GM12878 (cell line): ENCODE measurements at regions of chr1 and their contacts with region 1.

Region 1: DNA sequence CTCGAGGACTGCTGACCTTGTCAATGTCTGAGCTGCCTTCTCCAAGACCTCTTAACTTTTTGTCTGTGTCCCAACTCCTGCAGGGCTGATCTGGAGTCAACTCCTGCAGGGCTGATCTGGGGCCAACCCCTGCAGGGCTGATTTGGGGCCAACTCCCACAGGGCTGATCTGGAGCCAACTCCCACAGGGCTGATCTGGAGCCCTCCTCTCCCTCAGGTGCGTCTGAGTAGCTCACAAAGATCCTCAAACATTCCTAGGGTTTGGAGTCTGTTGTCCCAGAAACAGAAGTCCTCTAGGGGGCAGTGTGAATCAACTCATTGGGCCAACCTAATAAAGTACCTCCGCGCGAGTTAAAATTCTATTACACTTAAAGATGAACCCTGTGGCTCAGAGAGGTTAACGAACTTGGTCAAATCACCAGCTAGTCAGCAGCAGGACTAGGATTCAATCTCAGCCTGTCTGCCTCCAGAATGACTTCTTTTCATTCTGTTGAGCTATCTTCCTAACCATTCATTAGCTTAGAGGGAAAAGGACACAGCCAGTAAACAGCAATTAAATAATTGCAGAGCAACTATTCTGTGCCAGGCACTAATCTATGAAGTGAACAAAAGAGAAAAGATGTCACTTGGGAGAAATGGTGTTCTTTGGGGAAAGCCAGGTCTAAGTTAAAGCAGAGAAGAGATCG is 17.2 kb upstream of the RLF start:
- DNase-seq: peak; percentile 39
- ATAC-seq: peak; percentile 96
- H3K4me3 ChIP-seq: no peak overlapping the region
- H3K27ac ChIP-seq: no peak overlapping the region
- H3K4me1 ChIP-seq: no peaks in the 10 kb centered on the region
- H3K27me3 ChIP-seq: no peaks in the 10 kb centered on the region; a peak in 1 of 4 replicates
- CTCF ChIP-seq: peak; percentile 69 to 84 (median 72)
- EP300 ChIP-seq: no peak
- POLR2A ChIP-seq: no peak
- RAD21 ChIP-seq: peak; percentile 95

Region 2: DNA sequence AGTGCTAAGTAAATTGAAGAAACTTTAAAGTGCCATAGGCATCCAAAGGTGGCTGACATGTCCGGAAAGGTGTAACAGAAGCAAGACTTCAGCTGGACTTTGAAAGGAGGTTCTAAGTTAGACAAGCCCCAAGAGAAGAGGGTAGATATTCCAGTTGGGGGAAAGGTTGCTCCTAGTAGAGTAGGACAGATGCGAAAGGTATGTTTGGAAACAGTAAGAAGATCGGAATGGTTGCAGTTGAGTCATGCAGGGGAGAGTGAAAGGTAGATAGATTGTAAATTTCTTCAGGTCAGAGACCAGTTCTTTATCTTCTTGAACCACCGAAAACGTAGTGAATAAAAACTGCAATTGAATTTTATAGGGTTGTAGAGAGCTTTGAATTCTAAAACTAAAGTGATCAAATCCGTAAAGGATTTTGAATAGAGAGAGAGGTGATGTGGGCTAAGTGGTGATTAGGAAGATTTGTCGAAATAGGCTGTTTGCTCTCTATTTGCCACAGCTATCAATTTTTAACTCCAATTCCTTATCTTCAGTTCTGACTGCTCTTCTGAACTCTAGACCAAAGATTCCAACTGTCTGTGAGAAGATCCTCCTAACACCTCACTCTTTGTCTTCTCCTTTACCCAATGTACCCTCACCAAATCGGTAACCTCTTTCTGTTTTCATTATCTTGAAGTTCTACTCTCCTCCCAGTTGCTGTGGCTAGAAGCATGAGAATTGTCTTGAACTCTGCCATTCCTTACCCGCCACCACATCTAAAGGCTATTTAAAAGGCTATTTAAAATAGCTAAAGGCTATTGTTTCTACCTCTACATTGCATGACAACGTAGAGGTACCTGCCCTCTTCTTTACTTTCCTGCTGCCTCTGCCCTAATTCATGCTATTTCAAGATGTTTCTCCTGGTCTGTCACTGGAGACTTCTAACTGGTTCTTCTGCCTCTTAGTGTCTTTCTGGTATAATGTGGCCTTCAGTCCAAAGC is 922.9 kb before region 1 on chr1:
- CTCF ChIA-PET with region 1: no interaction called
- POLR2A ChIA-PET with region 1: no interaction called
- RAD21 ChIA-PET with region 1: no interaction called
- SMC1A ChIA-PET with region 1: no interaction called
- in situ Hi-C with region 1: no loop called
- intact Hi-C with region 1: no loop called
- DNase-seq: no peak
- ATAC-seq: no peak
- H3K4me3 ChIP-seq: no peak overlapping the region
- H3K27ac ChIP-seq: no peak overlapping the region; the same call in 1 of the 2 replicates
- H3K4me1 ChIP-seq: peaks cover 2% of the 10 kb centered on the region; the same call in 1 of the 2 replicates
- H3K27me3 ChIP-seq: no peaks in the 10 kb centered on the region
- CTCF ChIP-seq: no peak
- EP300 ChIP-seq: no peak
- POLR2A ChIP-seq: no peak
- RAD21 ChIP-seq: no peak

Region 3: GRCh38 chr1:40161125-40161887 is 17.3 kb after region 1 on chr1 and contains the start of gene RLF:
- CTCF ChIA-PET with region 1: interaction called, 15 read pairs
- POLR2A ChIA-PET with region 1: no interaction called
- RAD21 ChIA-PET with region 1: interaction called, 4 read pairs
- SMC1A ChIA-PET with region 1: interaction called, 4 read pairs
- in situ Hi-C with region 1: no loop called
- intact Hi-C with region 1: no loop called
- DNase-seq: peak; percentile 67
- ATAC-seq: peak; percentile 92
- H3K4me3 ChIP-seq: peak within 1 kb of the TSS; percentile 97
- H3K27ac ChIP-seq: peak within 1 kb of the TSS; percentile 93
- H3K4me1 ChIP-seq: no peaks in the 10 kb centered on the region
- H3K27me3 ChIP-seq: no peaks in the 10 kb centered on the region
- CTCF ChIP-seq: no peak
- EP300 ChIP-seq: no peak; a peak in 1 of 4 replicates
- POLR2A ChIP-seq: peak; percentile 99
- RAD21 ChIP-seq: no peak
- polyA plus RNA-seq, gene RLF: 2.0 to 3.6 TPM

Region 4: DNA sequence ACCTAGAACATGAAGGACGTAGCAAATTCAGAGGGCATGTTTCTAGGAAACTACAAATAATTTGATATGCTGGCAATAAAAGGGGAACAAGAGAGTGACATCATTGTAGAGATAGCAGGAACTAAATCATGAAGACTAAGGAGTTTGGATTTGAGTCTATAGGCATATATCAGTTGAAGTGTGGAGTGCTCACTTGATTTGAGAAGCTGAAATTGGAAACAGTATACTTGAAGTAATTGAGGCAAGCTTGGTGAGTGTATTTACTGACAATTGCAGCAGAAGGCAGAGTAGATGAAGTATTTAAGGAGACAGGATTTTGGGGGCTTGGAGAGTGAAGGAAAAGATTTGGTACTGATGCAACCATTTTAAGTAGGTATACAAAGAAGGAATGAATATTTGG is 97.3 kb after region 1 on chr1:
- CTCF ChIA-PET with region 1: interaction called, 11 read pairs
- POLR2A ChIA-PET with region 1: no interaction called
- RAD21 ChIA-PET with region 1: no interaction called
- SMC1A ChIA-PET with region 1: no interaction called
- in situ Hi-C with region 1: no loop called
- intact Hi-C with region 1: no loop called
- DNase-seq: no peak
- ATAC-seq: peak; percentile 41
- H3K4me3 ChIP-seq: no peak overlapping the region
- H3K27ac ChIP-seq: peak overlapping the region; percentile 60
- H3K4me1 ChIP-seq: peaks cover 13% of the 10 kb centered on the region
- H3K27me3 ChIP-seq: no peaks in the 10 kb centered on the region
- CTCF ChIP-seq: no peak
- EP300 ChIP-seq: no peak
- POLR2A ChIP-seq: no peak
- RAD21 ChIP-seq: no peak

Region 5: DNA sequence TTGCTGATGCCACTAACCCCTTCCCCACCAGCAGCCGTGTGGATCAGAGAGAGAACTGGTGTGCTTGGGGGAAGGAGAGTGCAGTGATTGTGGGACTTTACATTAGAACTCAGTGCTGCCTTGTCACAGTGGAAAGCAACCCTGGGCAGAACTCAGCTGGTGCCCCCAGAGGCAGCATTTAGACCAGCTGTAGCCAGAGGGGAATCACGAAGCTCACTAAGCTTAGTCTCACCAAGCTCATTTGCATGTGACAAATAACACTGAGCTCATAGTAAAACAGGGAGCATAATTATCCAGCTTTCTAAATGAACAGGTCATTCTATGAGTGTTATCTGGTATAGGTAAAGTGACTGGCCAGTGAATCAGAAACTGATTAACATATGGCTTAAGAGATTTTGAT is 219.7 kb after region 1 on chr1:
- CTCF ChIA-PET with region 1: interaction called, 14 read pairs
- POLR2A ChIA-PET with region 1: no interaction called
- RAD21 ChIA-PET with region 1: interaction called, 8 read pairs
- SMC1A ChIA-PET with region 1: interaction called, 5 read pairs
- in situ Hi-C with region 1: no loop called
- intact Hi-C with region 1: no loop called
- DNase-seq: no peak
- ATAC-seq: peak; percentile 100
- H3K4me3 ChIP-seq: no peak overlapping the region
- H3K27ac ChIP-seq: no peak overlapping the region
- H3K4me1 ChIP-seq: no peaks in the 10 kb centered on the region; the same call in 1 of the 2 replicates
- H3K27me3 ChIP-seq: no peaks in the 10 kb centered on the region
- CTCF ChIP-seq: peak; percentile 28 to 43 (median 36); a peak in 4 of 6 replicates
- EP300 ChIP-seq: no peak
- POLR2A ChIP-seq: no peak
- RAD21 ChIP-seq: peak; percentile 32

Region 6: DNA sequence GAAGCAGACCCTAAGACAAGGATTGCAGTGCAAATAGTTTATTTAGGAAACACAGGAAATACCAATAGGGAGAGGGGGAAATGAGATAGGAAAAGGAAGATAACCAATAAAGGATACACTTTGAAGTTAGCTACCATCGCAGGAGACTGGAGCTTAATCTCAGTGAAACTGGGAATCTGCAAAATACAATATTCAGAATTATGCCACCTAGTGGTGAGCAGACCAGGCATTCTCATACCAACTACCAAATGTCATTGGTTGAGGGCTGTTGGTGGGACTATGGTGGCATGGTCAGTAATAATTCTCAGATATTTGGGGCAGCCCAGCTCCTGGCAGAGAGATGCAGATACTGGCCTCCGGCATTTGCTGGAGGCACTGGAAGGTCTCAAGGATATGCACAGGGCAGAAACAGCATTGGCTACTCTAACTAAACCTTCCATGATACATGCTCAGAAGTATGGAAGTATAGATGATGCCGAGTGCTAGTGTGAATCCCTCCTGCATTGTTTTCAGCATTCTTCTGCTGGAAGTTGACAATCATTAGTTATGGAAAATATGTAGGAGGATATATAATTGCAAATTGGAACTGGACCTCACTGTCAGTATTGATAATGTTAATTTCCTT is 294.5 kb after region 1 on chr1:
- CTCF ChIA-PET with region 1: interaction called, 40 read pairs
- POLR2A ChIA-PET with region 1: no interaction called
- RAD21 ChIA-PET with region 1: interaction called, 10 read pairs
- SMC1A ChIA-PET with region 1: interaction called, 12 read pairs
- in situ Hi-C with region 1: no loop called
- intact Hi-C with region 1: loop called (anchors 1 kb)
- DNase-seq: no peak
- ATAC-seq: peak; percentile 84
- H3K4me3 ChIP-seq: no peak overlapping the region
- H3K27ac ChIP-seq: no peak overlapping the region
- H3K4me1 ChIP-seq: no peaks in the 10 kb centered on the region
- H3K27me3 ChIP-seq: no peaks in the 10 kb centered on the region
- CTCF ChIP-seq: peak; percentile 48 to 63 (median 53)
- EP300 ChIP-seq: no peak
- POLR2A ChIP-seq: no peak
- RAD21 ChIP-seq: peak; percentile 35; the same call in 1 of the 2 replicates